Activated CD4-positive, alpha-beta T cell treated with anti-CD3 and anti-CD28 coated beads for 36 hours (primary cell): ENCODE measurements at regions of chr19 and their contacts with region 1.

Region 1: GRCh38 chr19:17266975-17267788 is at the start of gene BABAM1:
- DNase-seq: peak; percentile 98
- ATAC-seq: peak; percentile 96
- H3K4me3 Mint-ChIP-seq: peak within 1 kb of the TSS; percentile 94
- H3K27ac Mint-ChIP-seq: peak within 1 kb of the TSS; percentile 85
- H3K4me1 Mint-ChIP-seq: peaks cover 11% of the 10 kb centered on the region
- H3K27me3 Mint-ChIP-seq: no peaks in the 10 kb centered on the region
- total RNA-seq, gene BABAM1: 109 to 132 TPM

Region 2: GRCh38 chr19:16495982-16496612 is 771.1 kb before region 1 on chr19 and contains the starts of genes C19orf44 and CALR3:
- CTCF ChIA-PET with region 1: no interaction called
- POLR2A ChIA-PET with region 1: no interaction called
- intact Hi-C with region 1: loop called in 1 of 2 experiments (anchors 1 kb)
- DNase-seq: peak; percentile 99
- ATAC-seq: peak; percentile 99
- H3K4me3 Mint-ChIP-seq: peak within 1 kb of the TSS; percentile 89
- H3K27ac Mint-ChIP-seq: peak within 1 kb of the TSS; percentile 79
- H3K4me1 Mint-ChIP-seq: peaks cover 13% of the 10 kb centered on the region
- H3K27me3 Mint-ChIP-seq: no peaks in the 10 kb centered on the region
- total RNA-seq, gene C19orf44: 2.9 to 4.0 TPM
- total RNA-seq, gene CALR3: not detected

Region 3: GRCh38 chr19:16829010-16829821 is 438.0 kb before region 1 on chr19 and contains the start of gene SIN3B:
- CTCF ChIA-PET with region 1: no interaction called
- POLR2A ChIA-PET with region 1: no interaction called
- intact Hi-C with region 1: loop called in 1 of 2 experiments (anchors 1 kb)
- DNase-seq: peak; percentile 93
- ATAC-seq: peak; percentile 91
- H3K4me3 Mint-ChIP-seq: peak within 1 kb of the TSS; percentile 79
- H3K27ac Mint-ChIP-seq: peak within 1 kb of the TSS; percentile 82
- H3K4me1 Mint-ChIP-seq: peaks cover 38% of the 10 kb centered on the region
- H3K27me3 Mint-ChIP-seq: peaks cover 20% of the 10 kb centered on the region
- total RNA-seq, gene SIN3B: 27.6 to 28.5 TPM

Region 4: DNA sequence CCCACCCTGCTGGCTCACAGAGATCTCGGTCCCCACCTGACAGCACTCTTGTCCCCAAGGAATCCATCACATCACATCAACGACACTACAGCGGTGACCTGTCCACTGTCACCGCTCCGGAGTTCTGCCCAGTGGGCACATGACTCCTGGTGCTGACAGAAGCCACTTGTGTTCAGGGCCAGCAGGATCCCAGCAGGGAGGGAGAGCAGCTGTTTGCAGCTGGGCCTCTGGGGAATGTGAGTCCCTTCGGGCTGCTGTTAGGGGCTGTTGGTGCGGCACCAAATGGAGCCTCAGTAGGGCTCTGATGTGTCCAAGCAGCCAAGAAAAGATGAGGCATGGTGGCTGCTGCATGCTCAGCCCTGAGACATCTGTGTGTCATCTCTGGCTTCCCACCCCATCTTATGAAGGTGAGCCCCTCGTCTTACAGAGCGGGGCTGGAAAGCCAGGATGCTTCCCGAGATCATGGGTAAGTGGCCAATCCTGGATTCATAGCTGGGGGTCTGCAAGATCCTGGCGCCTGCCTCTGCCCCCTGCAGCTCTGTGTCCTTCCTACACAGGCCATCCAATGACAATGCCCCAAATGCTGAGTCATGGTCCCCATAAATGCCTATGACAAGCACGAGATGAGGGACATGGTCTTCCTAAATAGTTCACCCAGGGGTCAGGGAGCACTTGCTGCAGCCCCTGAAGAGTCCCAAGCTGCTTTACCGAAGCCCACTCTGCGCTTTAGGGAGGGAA is 322.4 kb before region 1 on chr19:
- CTCF ChIA-PET with region 1: no interaction called
- POLR2A ChIA-PET with region 1: no interaction called
- intact Hi-C with region 1: no loop called
- DNase-seq: no peak
- ATAC-seq: no peak
- H3K4me3 Mint-ChIP-seq: no peak overlapping the region
- H3K27ac Mint-ChIP-seq: no peak overlapping the region
- H3K4me1 Mint-ChIP-seq: no peaks in the 10 kb centered on the region
- H3K27me3 Mint-ChIP-seq: peaks cover 7% of the 10 kb centered on the region

Region 5: GRCh38 chr19:17235618-17236377 is 31.4 kb before region 1 on chr19:
- CTCF ChIA-PET with region 1: interaction called, 11 read pairs
- POLR2A ChIA-PET with region 1: no interaction called
- intact Hi-C with region 1: loop called in 1 of 2 experiments (anchors 1 kb)
- DNase-seq: peak; percentile 87
- ATAC-seq: peak; percentile 85
- H3K4me3 Mint-ChIP-seq: peak overlapping the region; percentile 79
- H3K27ac Mint-ChIP-seq: peak overlapping the region; percentile 65
- H3K4me1 Mint-ChIP-seq: peaks cover 9% of the 10 kb centered on the region
- H3K27me3 Mint-ChIP-seq: no peaks in the 10 kb centered on the region

Region 6: GRCh38 chr19:17292286-17293097 is 25.3 kb after region 1 on chr19:
- CTCF ChIA-PET with region 1: interaction called, 4 read pairs
- POLR2A ChIA-PET with region 1: interaction called, 6 read pairs
- intact Hi-C with region 1: loop called in 1 of 2 experiments (anchors 1 kb)
- DNase-seq: peak; percentile 90
- ATAC-seq: peak; percentile 98
- H3K4me3 Mint-ChIP-seq: peak overlapping the region; percentile 88
- H3K27ac Mint-ChIP-seq: peak overlapping the region; percentile 84
- H3K4me1 Mint-ChIP-seq: peaks cover 5% of the 10 kb centered on the region
- H3K27me3 Mint-ChIP-seq: no peaks in the 10 kb centered on the region

Region 7: GRCh38 chr19:17321655-17322489 is 54.7 kb after region 1 on chr19:
- CTCF ChIA-PET with region 1: no interaction called
- POLR2A ChIA-PET with region 1: no interaction called
- intact Hi-C with region 1: no loop called
- DNase-seq: no peak
- ATAC-seq: no peak
- H3K4me3 Mint-ChIP-seq: no peak overlapping the region
- H3K27ac Mint-ChIP-seq: no peak overlapping the region
- H3K4me1 Mint-ChIP-seq: peaks cover 3% of the 10 kb centered on the region
- H3K27me3 Mint-ChIP-seq: no peaks in the 10 kb centered on the region

Region 8: GRCh38 chr19:17419621-17420466 is 152.7 kb after region 1 on chr19 and contains the start of gene MVB12A:
- CTCF ChIA-PET with region 1: interaction called, 4 read pairs
- POLR2A ChIA-PET with region 1: no interaction called
- intact Hi-C with region 1: loop called in 1 of 2 experiments (anchors 1 kb)
- DNase-seq: peak; percentile 97
- ATAC-seq: peak; percentile 95
- H3K4me3 Mint-ChIP-seq: peak within 1 kb of the TSS; percentile 91
- H3K27ac Mint-ChIP-seq: peak within 1 kb of the TSS; percentile 87
- H3K4me1 Mint-ChIP-seq: peaks cover 11% of the 10 kb centered on the region
- H3K27me3 Mint-ChIP-seq: no peaks in the 10 kb centered on the region
- total RNA-seq, gene MVB12A: 27.6 to 32.6 TPM